A549 (cell line): ENCODE measurements at regions of chr1 and their contacts with region 1.

Region 1: DNA sequence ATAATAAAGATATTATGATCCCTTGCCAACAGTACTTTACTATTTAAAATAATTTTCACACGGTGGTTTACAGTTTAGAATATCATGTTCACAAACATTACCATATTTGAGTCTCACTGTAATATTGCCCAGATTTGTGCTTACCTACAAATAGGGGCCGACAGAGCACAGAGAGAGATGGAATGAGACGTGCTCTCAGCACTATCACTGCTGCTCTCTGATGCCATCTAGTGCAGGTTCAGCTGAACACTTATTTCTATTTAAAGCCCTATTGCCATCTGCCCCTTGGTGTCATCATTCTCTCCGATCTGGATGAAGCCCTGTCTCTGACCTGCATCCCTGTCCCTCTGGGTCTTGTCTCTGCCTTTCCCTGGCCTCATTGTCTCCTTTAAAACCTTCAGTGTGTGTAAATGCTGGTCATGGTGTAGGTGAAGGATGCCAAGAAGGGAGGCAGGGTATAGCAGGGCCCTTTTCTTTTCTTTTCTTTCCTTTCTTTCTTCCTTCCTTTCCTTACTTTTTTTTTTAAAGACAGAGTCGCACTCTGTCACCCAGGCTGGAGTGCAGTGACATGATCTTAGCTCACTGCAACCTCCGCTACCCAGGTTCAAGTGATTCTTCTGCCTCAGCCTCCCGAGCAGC is 6.9 kb upstream of the GPATCH4 start:
- DNase-seq: peak; percentile 67 to 84
- ATAC-seq: peak; percentile 98 to 99
- H3K4me3 ChIP-seq: no peak overlapping the region
- H3K27ac ChIP-seq: peak overlapping the region; percentile 41 to 70; a peak in 4 of 6 replicates
- H3K4me1 ChIP-seq: peaks cover 8% of the 10 kb centered on the region; the same call in 2 of the 3 replicates
- CTCF ChIP-seq: peak; percentile 83
- EP300 ChIP-seq: no peak
- POLR2A ChIP-seq: no peak
- RAD21 ChIP-seq: peak; percentile 71 to 76

Region 2: DNA sequence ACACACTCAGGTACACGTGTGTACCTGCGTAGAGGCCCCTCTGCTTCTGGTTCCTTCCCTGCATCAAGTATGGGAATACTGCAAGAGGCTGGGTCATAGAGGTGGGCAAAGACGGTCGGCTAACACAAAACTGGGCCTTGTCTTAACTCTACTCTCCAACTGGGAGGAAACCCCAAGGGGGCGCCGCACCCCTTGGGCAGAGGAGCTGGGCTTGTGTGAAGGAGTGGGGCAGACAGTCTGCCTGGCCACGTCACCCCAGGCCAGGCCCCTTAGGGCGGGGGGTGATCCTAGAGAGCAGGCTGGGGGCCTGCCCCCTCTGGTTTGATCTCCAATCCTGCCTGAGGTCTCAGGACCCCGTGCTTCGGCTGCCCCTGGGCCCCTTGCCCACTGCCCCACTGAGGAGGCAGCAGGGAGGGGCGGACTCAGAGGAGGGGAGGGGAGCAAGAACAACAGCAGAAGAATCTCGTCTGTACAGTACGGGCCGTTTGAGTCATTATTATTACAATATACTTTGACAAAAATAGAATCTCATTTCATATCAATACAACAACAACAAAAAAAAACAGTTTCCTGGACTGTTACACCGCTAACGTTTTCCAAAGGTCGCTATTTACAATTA is 142.3 kb before region 1 on chr1:
- CTCF ChIA-PET with region 1: interaction called, 12 read pairs
- POLR2A ChIA-PET with region 1: no interaction called
- DNase-seq: peak in 1 of 2 experiments; percentile 38
- ATAC-seq: peak in 1 of 2 experiments; percentile 50; a peak in 3 of 6 replicates
- H3K4me3 ChIP-seq: no peak overlapping the region
- H3K27ac ChIP-seq: peak overlapping the region; percentile 10 to 43; a peak in 1 of 6 replicates
- H3K4me1 ChIP-seq: peaks cover 51% of the 10 kb centered on the region
- CTCF ChIP-seq: peak; percentile 36
- EP300 ChIP-seq: no peak
- POLR2A ChIP-seq: no peak
- RAD21 ChIP-seq: peak in 1 of 2 experiments; percentile 45; a peak in 2 of 5 replicates

Region 3: GRCh38 chr1:156500797-156501499 is 107.2 kb before region 1 on chr1:
- CTCF ChIA-PET with region 1: interaction called, 20 read pairs
- POLR2A ChIA-PET with region 1: no interaction called
- DNase-seq: peak; percentile 91 to 98
- ATAC-seq: peak; percentile 58 to 70
- H3K4me3 ChIP-seq: peak overlapping the region; percentile 98
- H3K27ac ChIP-seq: peak overlapping the region; percentile 98 to 100
- H3K4me1 ChIP-seq: peaks cover 70% of the 10 kb centered on the region
- CTCF ChIP-seq: peak; percentile 55
- EP300 ChIP-seq: peak in 1 of 2 experiments; percentile 32; a peak in 1 of 5 replicates
- POLR2A ChIP-seq: peak; percentile 57
- RAD21 ChIP-seq: peak in 1 of 2 experiments; percentile 31; a peak in 2 of 5 replicates

Region 4: GRCh38 chr1:156583821-156584622 is 24.1 kb before region 1 on chr1:
- CTCF ChIA-PET with region 1: interaction called, 135 read pairs
- POLR2A ChIA-PET with region 1: no interaction called
- DNase-seq: peak; percentile 85 to 88
- ATAC-seq: peak; percentile 67 to 80
- H3K4me3 ChIP-seq: no peak overlapping the region
- H3K27ac ChIP-seq: peak overlapping the region in 1 of 2 experiments; percentile 60; a peak in 3 of 6 replicates
- H3K4me1 ChIP-seq: 0 out of 3 replicates have a peak, but pooled peaks cover 4% of the 10 kb centered on the region
- CTCF ChIP-seq: peak; percentile 82
- EP300 ChIP-seq: no peak
- POLR2A ChIP-seq: no peak
- RAD21 ChIP-seq: peak; percentile 78 to 85

Region 5: DNA sequence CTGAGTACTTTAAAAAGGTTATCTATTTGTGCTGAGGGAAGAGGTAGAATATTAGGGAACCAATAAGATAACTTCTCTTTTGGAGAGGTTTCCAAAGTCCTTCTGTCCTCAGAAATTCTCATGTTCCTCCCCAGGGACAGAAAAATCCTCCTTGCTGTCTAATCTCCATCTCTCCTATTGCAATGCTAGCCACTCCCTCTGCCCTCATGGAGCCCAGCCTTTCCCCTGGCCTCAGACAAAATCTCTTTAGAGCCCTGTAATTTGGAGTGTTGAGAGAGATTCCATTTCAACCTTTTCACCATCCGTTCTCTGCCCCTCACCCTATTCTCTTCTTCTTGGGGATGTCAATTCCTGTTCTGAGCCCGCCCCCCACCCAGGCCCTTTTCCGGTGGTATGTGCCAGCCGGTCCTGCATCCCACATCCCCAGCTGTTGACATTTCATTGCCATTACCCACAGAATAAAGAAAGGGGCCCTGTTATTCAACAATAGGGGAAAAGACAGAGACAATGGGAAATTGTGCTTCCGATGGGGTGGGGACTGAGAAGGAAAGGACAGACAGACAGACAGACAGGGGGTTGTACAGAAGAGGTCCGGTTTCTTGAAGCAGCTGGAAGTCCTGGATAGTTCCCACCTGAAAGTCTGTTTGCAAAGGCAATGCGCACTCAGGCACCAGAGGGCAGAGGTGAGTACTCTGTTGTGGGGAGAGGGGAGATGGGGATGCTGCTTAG is 10.9 kb after region 1 on chr1 and contains the start of gene HAPLN2:
- CTCF ChIA-PET with region 1: interaction called, 115 read pairs
- POLR2A ChIA-PET with region 1: no interaction called
- DNase-seq: peak; percentile 50 to 56
- ATAC-seq: peak; percentile 72 to 78
- H3K4me3 ChIP-seq: no peak within 1 kb of the TSS
- H3K27ac ChIP-seq: no peak within 1 kb of the TSS; a peak in 1 of 6 replicates
- H3K4me1 ChIP-seq: peaks cover 15% of the 10 kb centered on the region
- CTCF ChIP-seq: peak; percentile 54
- EP300 ChIP-seq: no peak
- POLR2A ChIP-seq: no peak
- RAD21 ChIP-seq: peak in 1 of 2 experiments; percentile 20; a peak in 1 of 5 replicates
- polyA plus RNA-seq, gene HAPLN2: 0.11 and 0.23 TPM in 2 replicates

Region 6: GRCh38 chr1:156920233-156921052 is 312.3 kb after region 1 on chr1 and contains the start of gene LRRC71:
- CTCF ChIA-PET with region 1: no interaction called
- POLR2A ChIA-PET with region 1: no interaction called
- DNase-seq: peak; percentile 79 to 90
- ATAC-seq: peak; percentile 87 to 97
- H3K4me3 ChIP-seq: peak within 1 kb of the TSS; percentile 29
- H3K27ac ChIP-seq: peak within 1 kb of the TSS; percentile 65 to 86
- H3K4me1 ChIP-seq: peaks cover 10% of the 10 kb centered on the region
- CTCF ChIP-seq: peak; percentile 94
- EP300 ChIP-seq: no peak
- POLR2A ChIP-seq: peak; percentile 20; the same call in 1 of the 2 replicates
- RAD21 ChIP-seq: peak; percentile 89 to 97
- polyA plus RNA-seq, gene LRRC71: 0.15 TPM in 1 of 2 replicates, not detected in the other